CD4-positive, alpha-beta memory T cell (primary cell): ENCODE measurements at regions of chr1 and their contacts with region 1.

Region 1: DNA sequence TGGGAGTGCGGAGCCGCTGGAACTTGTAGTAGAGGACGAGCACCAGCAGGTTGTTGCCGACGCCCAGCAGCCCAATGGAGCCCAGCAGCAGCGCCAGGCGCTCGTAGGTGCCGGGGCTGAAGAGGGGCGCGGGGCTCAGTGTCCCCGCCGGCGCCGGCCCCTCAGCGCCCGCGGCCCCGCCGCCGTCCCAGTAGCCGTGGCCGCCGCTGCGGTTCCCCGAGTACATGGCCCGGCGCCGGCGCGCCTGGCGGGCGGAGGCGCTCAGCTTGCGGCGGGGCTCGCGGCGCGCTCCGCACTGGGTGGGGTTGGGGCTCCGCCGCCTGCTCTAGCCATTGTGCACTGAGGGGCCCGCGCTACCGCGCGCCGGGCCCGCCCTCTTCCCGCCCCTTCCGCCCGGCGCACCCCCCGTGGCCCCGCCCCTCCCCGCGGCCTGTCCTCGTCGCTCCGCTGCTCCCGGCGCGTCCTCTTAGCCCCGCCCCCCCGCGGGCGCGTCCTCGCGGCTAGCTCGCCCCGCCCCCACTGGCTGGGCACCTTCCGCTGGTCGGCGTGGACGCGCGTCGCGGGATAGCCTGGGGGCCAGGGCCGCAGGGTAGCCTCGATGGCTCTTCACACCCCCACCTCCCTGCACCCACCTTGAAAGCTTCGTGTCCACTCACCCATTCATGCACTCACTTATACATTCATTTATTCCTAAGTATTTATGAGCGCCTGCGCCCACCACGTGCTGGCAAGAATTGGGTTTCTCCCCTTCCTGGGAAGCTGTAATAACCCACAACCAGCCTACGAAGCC is at the starts of genes CHML and OPN3:
- DNase-seq: peak; percentile 83 to 87 (median 84)
- H3K4me3 ChIP-seq: peak within 1 kb of the TSS; percentile 64 to 82
- H3K4me3 Mint-ChIP-seq: peak within 1 kb of the TSS; percentile 81 to 89 (median 86)
- H3K27ac ChIP-seq: peak within 1 kb of the TSS; percentile 41
- H3K27ac Mint-ChIP-seq: peak within 1 kb of the TSS; percentile 60 to 96 (median 85)
- H3K4me1 ChIP-seq: peaks cover 25% of the 10 kb centered on the region
- H3K4me1 Mint-ChIP-seq: peaks cover 18 to 40% (median 25%) of the 10 kb centered on the region in 4 donors
- H3K27me3 ChIP-seq: no peaks in the 10 kb centered on the region
- H3K27me3 Mint-ChIP-seq: no peaks in the 10 kb centered on the region
- total RNA-seq, gene CHML: 7.5 to 8.8 TPM
- total RNA-seq, gene OPN3: 3.9 to 4.8 TPM

Region 2: DNA sequence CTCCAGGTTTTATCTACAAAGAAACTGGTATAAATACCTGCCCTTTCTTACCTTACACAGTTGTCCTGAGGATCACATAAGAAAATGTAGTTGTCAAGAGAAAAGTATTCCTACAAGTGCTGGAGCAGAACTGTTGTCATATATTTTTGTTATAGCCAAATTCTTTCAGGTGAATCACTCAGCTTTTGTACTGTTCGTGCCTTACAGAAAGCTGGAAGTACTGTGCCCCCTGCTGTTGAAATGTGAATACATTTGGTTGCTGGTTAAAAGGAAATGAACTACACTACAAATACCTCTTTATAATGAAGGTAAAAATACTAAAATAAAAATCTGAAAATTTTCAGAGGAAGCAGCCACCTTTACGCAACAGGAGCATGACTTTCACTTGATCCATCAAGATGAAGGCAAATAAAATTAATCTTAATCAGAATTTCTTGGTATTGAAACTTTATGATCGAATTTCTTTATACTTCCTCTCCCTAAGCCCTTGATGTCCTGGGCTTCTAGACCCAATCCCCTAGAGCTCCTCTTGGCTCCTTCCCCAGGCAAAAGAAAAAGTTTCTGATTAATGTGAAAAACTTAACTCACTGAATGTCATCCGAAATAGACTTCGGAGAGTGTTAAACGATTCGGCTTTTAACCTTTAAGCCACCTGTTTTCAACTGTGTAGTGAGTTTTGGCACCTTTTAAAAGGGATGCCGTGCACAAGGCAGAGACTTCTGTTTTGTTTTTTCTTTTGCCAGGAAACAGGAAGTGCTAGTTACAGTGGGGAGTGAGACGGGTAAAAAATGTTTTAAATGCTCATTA is 12.6 kb before region 1 on chr1:
- CTCF ChIA-PET with region 1: interaction called, 6 read pairs
- POLR2A ChIA-PET with region 1: interaction called, 5 read pairs
- intact Hi-C with region 1: loop called (anchors 1 kb)
- DNase-seq: peak; percentile 43 to 63 (median 55)
- H3K4me3 ChIP-seq: no peak overlapping the region
- H3K4me3 Mint-ChIP-seq: peak overlapping the region; percentile 30 to 82 (median 72)
- H3K27ac ChIP-seq: peak overlapping the region; percentile 7
- H3K27ac Mint-ChIP-seq: peak overlapping the region; percentile 60 to 88 (median 82)
- H3K4me1 ChIP-seq: peaks cover 7% of the 10 kb centered on the region
- H3K4me1 Mint-ChIP-seq: peaks cover 8 to 12% (median 9%) of the 10 kb centered on the region in 4 donors
- H3K27me3 ChIP-seq: no peaks in the 10 kb centered on the region
- H3K27me3 Mint-ChIP-seq: no peaks in the 10 kb centered on the region

Region 3: DNA sequence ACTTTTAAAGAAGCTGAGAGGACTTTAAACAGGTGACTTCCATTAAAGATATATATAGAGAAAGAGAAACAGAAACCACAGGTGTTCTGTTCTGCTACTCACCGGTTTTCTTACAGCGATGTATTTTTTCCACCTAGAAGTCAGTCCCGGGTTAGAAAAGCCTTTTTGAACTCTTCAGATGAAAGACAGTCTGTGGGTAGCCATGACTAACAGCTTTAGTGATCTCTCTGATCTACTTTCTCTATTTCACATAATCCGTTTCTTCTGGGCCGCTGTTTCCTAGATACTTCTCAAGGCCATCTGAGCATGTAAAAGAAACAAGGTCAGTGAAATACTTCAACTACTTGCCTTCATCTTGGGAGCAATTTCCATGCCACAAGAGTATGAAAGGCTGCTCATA is 37.0 kb after region 1 on chr1:
- CTCF ChIA-PET with region 1: interaction called, 3 read pairs
- POLR2A ChIA-PET with region 1: interaction called, 18 read pairs
- intact Hi-C with region 1: loop called (anchors 1 kb)
- DNase-seq: peak; percentile 54 to 69 (median 69)
- H3K4me3 ChIP-seq: peak overlapping the region in 1 of 2 donors; percentile 11
- H3K4me3 Mint-ChIP-seq: peak overlapping the region; percentile 63 to 87 (median 74)
- H3K27ac ChIP-seq: peak overlapping the region; percentile 56
- H3K27ac Mint-ChIP-seq: peak overlapping the region; percentile 74 to 94 (median 85)
- H3K4me1 ChIP-seq: peaks cover 22% of the 10 kb centered on the region
- H3K4me1 Mint-ChIP-seq: peaks cover 12 to 19% (median 15%) of the 10 kb centered on the region in 4 donors
- H3K27me3 ChIP-seq: no peaks in the 10 kb centered on the region
- H3K27me3 Mint-ChIP-seq: peaks cover 0 to 3% of the 10 kb centered on the region in 2 donors